Lower lobe of right lung (tissue), 2 donors: ENCODE measurements at regions of chr1 and their contacts with region 1.

Region 1: DNA sequence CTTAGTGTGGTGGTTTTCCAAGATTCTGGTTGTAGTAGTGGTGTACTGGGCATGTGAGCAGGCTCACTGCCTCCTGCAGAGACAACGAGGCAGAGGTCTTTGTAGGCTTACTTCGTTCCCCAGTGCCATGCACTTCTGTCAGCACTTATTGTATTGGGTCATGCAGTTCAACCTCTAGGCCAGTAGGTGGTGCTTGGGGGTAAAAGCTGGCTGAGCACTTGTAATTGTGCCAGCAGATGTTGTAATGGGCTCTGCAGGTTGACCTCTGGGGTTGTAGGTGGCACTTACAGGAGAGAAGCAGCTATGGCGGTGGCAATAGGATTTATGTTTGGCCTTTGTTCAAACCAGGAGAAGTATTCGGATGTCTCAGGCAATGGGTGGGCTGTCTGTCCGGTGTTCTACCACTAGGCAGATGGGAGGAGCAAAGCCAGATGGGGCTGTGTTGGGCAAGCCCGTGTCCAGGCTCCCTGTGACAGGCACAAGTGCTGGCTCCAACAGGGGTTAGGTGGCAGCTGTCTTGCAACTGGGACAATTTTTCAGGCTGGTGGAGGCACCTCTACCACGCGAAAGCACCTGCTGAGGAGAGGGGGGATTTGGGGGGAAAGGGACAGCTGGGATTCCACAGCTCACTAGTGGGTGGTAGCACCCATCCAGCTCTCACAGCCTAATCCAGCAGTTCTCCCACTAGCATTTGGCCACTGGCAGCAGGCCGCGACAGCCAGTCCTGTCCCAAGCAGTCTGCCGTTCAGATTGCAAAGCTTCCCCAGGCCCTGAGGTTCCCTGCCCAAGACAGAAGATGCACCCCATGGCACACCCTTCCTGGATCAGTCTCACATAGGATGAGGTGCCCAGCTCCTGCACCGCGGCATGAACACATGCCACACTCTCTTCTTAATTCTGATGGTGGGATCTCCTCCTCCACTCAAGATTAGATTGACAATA is 274.5 kb downstream of the CTH start:
- DNase-seq: peak; percentile 49
- ATAC-seq: peak; percentile 91 to 95
- H3K4me3 ChIP-seq: no peak overlapping the region
- H3K27ac ChIP-seq: no peak overlapping the region
- H3K4me1 ChIP-seq: no peaks in the 10 kb centered on the region
- H3K27me3 ChIP-seq: no peaks in the 10 kb centered on the region
- CTCF ChIP-seq: peak; percentile 89

Region 2: DNA sequence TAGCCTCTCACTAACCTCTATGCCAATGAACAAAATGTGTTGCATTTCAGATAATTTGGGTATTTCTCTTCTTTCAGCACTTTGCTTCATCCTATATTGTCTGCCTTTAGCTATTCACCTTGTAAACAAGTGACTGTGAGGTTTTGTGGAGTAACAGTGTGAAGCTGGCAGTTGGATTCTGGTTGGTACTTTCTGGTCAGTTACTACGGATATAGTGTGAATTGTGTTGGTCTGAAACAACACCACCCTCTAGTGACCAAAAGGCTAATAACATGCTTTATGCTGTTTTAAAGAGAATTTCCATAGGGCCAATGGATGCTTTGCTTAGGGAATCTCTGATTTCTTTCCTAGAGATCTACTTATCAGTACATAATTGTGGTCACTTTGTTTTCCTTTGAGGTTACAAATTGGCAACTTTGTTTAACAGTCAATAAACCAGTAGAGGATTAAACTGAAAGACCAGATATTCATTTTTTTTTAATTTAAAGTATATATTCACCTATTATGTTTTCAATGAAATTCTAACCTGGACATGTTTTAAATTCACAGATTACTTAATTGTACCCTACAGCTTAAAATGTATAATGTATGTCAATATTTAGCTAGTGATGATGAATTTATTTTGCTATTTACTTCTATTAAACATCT is 364.5 kb after region 1 on chr1:
- intact Hi-C with region 1: loop called (anchors 5 kb)
- DNase-seq: no peak
- ATAC-seq: peak; percentile 64 to 66
- H3K4me3 ChIP-seq: no peak overlapping the region
- H3K27ac ChIP-seq: no peak overlapping the region
- H3K4me1 ChIP-seq: peaks cover 19% of the 10 kb centered on the region
- H3K27me3 ChIP-seq: peaks cover 27% of the 10 kb centered on the region
- CTCF ChIP-seq: peak; percentile 71